ENCODE measurements at regions of chr3 and their contacts with region 1.

Region 1: DNA sequence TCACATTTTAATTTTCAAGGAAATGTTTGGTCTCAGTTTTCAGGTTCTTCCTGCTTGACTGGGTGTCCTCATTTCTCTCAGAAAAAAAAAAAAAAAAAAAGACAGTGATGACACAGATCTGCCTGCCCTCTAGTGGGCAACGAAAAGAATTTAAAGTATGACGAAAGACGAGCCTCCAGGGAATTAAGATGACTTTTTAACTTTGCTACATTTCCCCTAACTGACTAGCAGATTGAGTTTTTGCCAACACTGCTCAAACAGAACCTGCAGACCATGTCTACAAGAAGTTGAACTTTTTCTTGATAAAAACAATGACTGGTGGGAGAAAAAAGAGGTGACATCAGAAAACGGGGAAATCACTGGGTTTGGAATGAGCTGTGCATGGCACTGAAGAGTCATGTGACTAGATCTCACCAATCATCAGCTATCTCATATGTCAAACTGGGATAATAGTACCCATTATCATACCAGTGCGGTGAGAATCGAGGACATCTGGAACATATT is 40.8 kb downstream of the EOMES start:
- DNase-seq: no peak
- H3K4me3 ChIP-seq: no peak overlapping the region
- H3K27ac ChIP-seq: no peak overlapping the region
- H3K4me1 ChIP-seq: no peaks in the 10 kb centered on the region
- H3K27me3 ChIP-seq: no peaks in the 10 kb centered on the region
- CTCF ChIP-seq: peak; percentile 63

Region 2: GRCh38 chr3:27134165-27134796 is 547.0 kb before region 1 on chr3:
- intact Hi-C with region 1: loop called (anchors 10 kb)
- DNase-seq: peak; percentile 74
- H3K4me3 ChIP-seq: no peak overlapping the region
- H3K27ac ChIP-seq: no peak overlapping the region
- H3K4me1 ChIP-seq: no peaks in the 10 kb centered on the region
- H3K27me3 ChIP-seq: no peaks in the 10 kb centered on the region
- CTCF ChIP-seq: peak; percentile 84

Region 3: GRCh38 chr3:27312044-27312668 is 369.1 kb before region 1 on chr3:
- intact Hi-C with region 1: loop called (anchors 2 kb)
- DNase-seq: no peak
- H3K4me3 ChIP-seq: no peak overlapping the region
- H3K27ac ChIP-seq: no peak overlapping the region
- H3K4me1 ChIP-seq: no peaks in the 10 kb centered on the region
- H3K27me3 ChIP-seq: no peaks in the 10 kb centered on the region
- CTCF ChIP-seq: peak; percentile 87

Region 4: GRCh38 chr3:27485866-27486265 is 195.4 kb before region 1 on chr3:
- intact Hi-C with region 1: loop called (anchors 5 kb)
- DNase-seq: no peak
- H3K4me3 ChIP-seq: no peak overlapping the region
- H3K27ac ChIP-seq: no peak overlapping the region
- H3K4me1 ChIP-seq: no peaks in the 10 kb centered on the region
- H3K27me3 ChIP-seq: no peaks in the 10 kb centered on the region
- CTCF ChIP-seq: no peak

Measured in colonic mucosa (tissue), 4 donors.